PC-9 (cell line): ENCODE measurements at regions of chr7 and their contacts with region 1.

Region 1: GRCh38 chr7:76262683-76263402 is 39.6 kb upstream of the HSPB1 start:
- DNase-seq: peak; percentile 56 to 73
- H3K4me3 ChIP-seq: no peak overlapping the region
- H3K27ac ChIP-seq: no peak overlapping the region
- H3K4me1 ChIP-seq: no peaks in the 10 kb centered on the region
- H3K27me3 ChIP-seq: no peaks in the 10 kb centered on the region
- CTCF ChIP-seq: peak; percentile 83

Region 2: GRCh38 chr7:76179686-76180085 is 83.2 kb before region 1 on chr7:
- CTCF ChIA-PET with region 1: interaction called, 7 read pairs
- POLR2A ChIA-PET with region 1: interaction called, 3 read pairs
- intact Hi-C with region 1: loop called (anchors 1 kb)
- DNase-seq: no peak
- H3K4me3 ChIP-seq: no peak overlapping the region
- H3K27ac ChIP-seq: no peak overlapping the region
- H3K4me1 ChIP-seq: no peaks in the 10 kb centered on the region
- H3K27me3 ChIP-seq: no peaks in the 10 kb centered on the region
- CTCF ChIP-seq: no peak

Region 3: GRCh38 chr7:77247206-77247850 is 984.5 kb after region 1 on chr7:
- CTCF ChIA-PET with region 1: no interaction called
- POLR2A ChIA-PET with region 1: interaction called, 23 read pairs
- intact Hi-C with region 1: no loop called
- DNase-seq: peak; percentile 61 to 70
- H3K4me3 ChIP-seq: no peak overlapping the region
- H3K27ac ChIP-seq: no peak overlapping the region
- H3K4me1 ChIP-seq: no peaks in the 10 kb centered on the region
- H3K27me3 ChIP-seq: no peaks in the 10 kb centered on the region
- CTCF ChIP-seq: peak; percentile 94